Breast epithelium (tissue), 4 donors: ENCODE measurements at regions of chr19 and their contacts with region 1.

Region 1: DNA sequence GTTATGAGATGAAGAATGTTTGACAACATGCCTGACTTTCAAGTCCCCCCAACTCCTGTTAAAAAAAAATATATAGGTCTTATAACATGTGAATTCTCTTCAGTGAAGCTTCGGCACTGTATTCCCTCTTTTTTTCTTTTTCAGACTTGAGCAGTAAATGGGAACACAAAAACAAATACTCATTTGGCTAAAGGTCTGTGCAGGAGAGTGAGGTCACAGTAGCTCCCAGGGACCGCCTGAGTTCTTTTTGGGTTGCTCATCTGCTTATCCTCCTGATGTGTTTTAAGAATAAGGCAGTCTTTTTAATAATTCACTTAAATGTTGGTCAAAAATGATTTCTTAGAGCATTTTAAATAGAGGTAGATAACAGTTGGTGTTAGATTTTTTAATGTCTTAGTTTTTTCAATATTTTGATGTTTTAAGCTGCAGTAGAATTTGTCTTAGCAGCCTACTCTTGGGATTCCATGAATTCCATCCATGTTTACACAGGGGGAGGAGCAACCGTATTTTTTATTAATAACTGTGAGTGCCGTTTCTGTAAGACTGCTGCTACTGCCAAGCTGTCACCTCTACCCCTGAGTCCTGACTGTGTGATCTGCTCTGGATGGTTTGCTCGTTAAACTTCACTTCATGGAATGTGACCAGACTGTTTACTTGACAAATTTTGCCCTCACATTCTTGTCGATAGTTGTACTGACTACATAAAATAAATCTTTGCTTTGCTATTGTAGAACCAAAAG is 14.9 kb downstream of the HNRNPM start:
- DNase-seq: no peak
- H3K4me3 ChIP-seq: peak overlapping the region in 1 of 3 donors; percentile 3
- H3K27ac ChIP-seq: peak overlapping the region; percentile 49 to 72
- H3K4me1 ChIP-seq: peaks cover 0 to 29% of the 10 kb centered on the region in 2 donors
- H3K27me3 ChIP-seq: no peaks in the 10 kb centered on the region
- CTCF ChIP-seq: no peak
- POLR2A ChIP-seq: no peak

Region 2: DNA sequence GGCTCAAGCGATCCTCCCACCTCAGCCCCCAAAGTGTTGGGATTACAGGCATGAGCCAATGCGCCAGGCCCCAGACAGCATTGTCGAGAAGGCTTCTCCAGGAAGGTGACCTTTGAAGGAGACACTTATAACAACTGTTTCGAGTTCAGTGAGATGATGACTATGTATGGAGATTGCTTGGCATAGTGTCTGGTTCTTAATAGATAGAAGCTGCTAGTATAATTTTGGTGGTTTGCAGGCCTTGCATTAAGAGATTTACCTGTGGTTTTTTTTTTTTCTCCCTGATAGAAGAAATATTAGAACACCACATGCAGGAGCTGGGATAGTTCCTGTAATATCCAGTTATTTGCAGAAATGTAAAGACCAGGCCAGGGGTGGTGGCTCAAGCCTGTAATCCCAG is 42.9 kb before region 1 on chr19:
- intact Hi-C with region 1: loop called (anchors 1 kb)
- DNase-seq: no peak
- H3K4me3 ChIP-seq: no peak overlapping the region
- H3K27ac ChIP-seq: no peak overlapping the region
- H3K4me1 ChIP-seq: no peaks in the 10 kb centered on the region
- H3K27me3 ChIP-seq: no peaks in the 10 kb centered on the region
- CTCF ChIP-seq: no peak
- POLR2A ChIP-seq: no peak